Activated CD4-positive, alpha-beta memory T cell treated with anti-CD3 and anti-CD28 coated beads for 36 hours (primary cell): ENCODE measurements at regions of chr7 and their contacts with region 1.

Region 1: DNA sequence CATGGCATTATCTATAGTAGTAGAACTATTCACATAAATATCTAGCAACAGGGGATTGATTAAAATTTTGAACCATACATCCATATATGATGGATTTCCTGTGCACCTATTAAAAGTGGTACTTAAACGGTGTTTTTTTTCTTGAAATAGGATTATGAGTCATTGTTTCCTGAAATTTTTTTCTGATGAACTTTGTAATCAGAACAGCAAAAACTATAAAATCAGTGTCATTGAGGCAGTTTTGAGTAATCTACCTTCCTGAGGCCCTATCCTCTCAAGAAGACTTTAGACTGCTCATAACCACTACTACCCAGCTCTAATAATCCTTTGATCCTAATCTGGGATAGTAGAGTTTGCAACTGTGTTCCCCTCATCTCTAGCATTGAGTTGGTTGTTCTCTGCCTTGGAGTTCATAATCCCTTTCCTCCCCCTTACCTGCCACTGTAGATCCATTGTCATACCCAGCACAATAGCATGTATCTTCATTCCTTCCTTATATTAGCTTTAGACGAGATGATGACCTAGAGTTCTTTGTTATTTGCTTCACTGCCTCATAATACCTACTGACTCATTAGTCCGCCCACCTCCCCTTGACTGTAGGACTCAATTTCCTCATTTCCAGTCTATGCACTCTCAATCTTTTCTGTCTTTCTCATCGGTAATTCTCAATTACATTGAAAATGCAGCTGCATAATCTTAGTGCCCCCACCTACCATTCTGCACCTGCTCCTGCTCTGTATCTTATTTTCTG is 133.4 kb downstream of the LRRC4 start:
- DNase-seq: peak; percentile 55
- H3K4me3 Mint-ChIP-seq: no peak overlapping the region
- H3K27ac Mint-ChIP-seq: no peak overlapping the region
- H3K4me1 Mint-ChIP-seq: peaks cover 12% of the 10 kb centered on the region
- H3K27me3 Mint-ChIP-seq: no peaks in the 10 kb centered on the region

Region 2: DNA sequence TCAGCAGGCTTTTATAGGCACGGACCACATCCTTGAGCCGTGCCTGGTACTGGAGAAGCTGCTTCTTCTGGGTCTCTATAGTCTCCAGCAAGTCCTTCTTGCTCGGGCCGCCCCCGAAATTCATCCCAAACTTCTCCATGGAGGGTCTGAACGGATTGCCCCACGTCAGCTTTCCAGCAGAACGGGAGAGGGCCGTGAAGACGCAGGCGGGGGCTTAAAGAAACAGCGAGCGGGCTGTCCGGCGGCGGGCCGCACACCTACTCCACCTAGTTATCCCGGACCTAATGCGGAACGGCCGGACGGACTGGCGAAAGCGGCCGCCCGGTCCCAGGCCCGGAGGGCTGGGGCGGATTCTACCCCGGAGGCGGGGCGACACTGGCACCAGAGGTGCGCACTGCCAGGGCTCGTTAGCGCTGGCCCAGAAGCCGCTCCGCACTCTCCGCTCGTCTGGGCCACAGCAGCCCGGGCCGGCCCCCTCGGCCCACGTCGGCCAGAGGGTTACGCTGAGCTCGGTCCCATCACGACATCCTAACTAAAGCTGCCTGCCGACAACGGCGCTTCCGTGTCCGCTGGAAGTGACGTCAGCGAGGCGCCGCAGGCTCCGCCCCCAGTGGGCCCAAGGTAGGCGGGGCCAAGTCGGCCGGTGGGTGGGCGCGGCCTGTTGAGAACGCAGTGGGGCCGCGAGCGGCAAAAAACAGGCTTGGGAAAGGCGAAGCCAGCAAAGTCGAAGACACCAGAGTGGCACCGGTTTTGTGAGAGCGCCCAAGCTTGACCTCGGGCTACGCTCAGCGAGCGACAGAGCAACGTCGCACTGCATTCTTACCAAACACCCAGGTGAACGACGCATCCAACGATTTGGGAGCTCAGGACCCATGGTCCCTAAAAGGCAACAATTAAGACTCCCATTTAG is 312.6 kb before region 1 on chr7 and contains the start of gene GCC1:
- CTCF ChIA-PET with region 1: no interaction called
- POLR2A ChIA-PET with region 1: no interaction called
- intact Hi-C with region 1: loop called (anchors 1 kb)
- DNase-seq: peak; percentile 96
- H3K4me3 Mint-ChIP-seq: peak within 1 kb of the TSS; percentile 88
- H3K27ac Mint-ChIP-seq: peak within 1 kb of the TSS; percentile 64
- H3K4me1 Mint-ChIP-seq: peaks cover 69% of the 10 kb centered on the region
- H3K27me3 Mint-ChIP-seq: no peaks in the 10 kb centered on the region
- total RNA-seq, gene GCC1: 14.1 to 15.0 TPM

Region 3: GRCh38 chr7:127651556-127652332 is 246.1 kb before region 1 on chr7 and contains the start of gene SND1:
- CTCF ChIA-PET with region 1: no interaction called
- POLR2A ChIA-PET with region 1: no interaction called
- intact Hi-C with region 1: loop called (anchors 5 kb)
- DNase-seq: peak; percentile 100
- H3K4me3 Mint-ChIP-seq: peak within 1 kb of the TSS; percentile 98
- H3K27ac Mint-ChIP-seq: peak within 1 kb of the TSS; percentile 94
- H3K4me1 Mint-ChIP-seq: peaks cover 31% of the 10 kb centered on the region
- H3K27me3 Mint-ChIP-seq: no peaks in the 10 kb centered on the region
- total RNA-seq, gene SND1: 208 to 235 TPM

Region 4: GRCh38 chr7:127858091-127858914 is 39.6 kb before region 1 on chr7:
- CTCF ChIA-PET with region 1: interaction called, 6 read pairs
- POLR2A ChIA-PET with region 1: interaction called, 8 read pairs
- intact Hi-C with region 1: loop called (anchors 1 kb)
- DNase-seq: no peak
- H3K4me3 Mint-ChIP-seq: no peak overlapping the region
- H3K27ac Mint-ChIP-seq: peak overlapping the region; percentile 23
- H3K4me1 Mint-ChIP-seq: peaks cover 60% of the 10 kb centered on the region
- H3K27me3 Mint-ChIP-seq: no peaks in the 10 kb centered on the region

Region 5: GRCh38 chr7:127874951-127875608 is 22.8 kb before region 1 on chr7:
- CTCF ChIA-PET with region 1: no interaction called
- POLR2A ChIA-PET with region 1: interaction called, 3 read pairs
- intact Hi-C with region 1: loop called (anchors 1 kb)
- DNase-seq: no peak
- H3K4me3 Mint-ChIP-seq: no peak overlapping the region
- H3K27ac Mint-ChIP-seq: no peak overlapping the region
- H3K4me1 Mint-ChIP-seq: peaks cover 23% of the 10 kb centered on the region
- H3K27me3 Mint-ChIP-seq: no peaks in the 10 kb centered on the region

Region 6: DNA sequence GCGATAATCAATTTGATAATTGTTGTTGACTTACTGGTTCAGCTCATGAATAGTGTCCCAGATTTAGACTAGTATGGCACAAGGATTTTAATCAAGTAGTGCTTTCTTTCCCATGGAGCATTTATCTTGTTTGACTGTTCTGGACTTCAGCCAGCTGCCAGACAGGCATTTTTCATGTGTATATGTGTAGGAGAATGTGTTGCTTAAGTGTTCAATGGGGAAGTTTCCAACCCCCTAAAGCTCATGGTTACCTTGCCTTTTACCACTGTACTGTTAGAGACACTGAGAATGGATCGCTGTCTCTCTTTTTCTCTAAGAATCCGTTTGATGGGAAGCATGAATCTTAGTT is 29.4 kb after region 1 on chr7:
- CTCF ChIA-PET with region 1: no interaction called
- POLR2A ChIA-PET with region 1: no interaction called
- intact Hi-C with region 1: loop called (anchors 2 kb)
- DNase-seq: no peak
- H3K4me3 Mint-ChIP-seq: no peak overlapping the region
- H3K27ac Mint-ChIP-seq: no peak overlapping the region
- H3K4me1 Mint-ChIP-seq: peaks cover 14% of the 10 kb centered on the region
- H3K27me3 Mint-ChIP-seq: no peaks in the 10 kb centered on the region

Region 7: GRCh38 chr7:128031901-128032604 is 134.2 kb after region 1 on chr7:
- CTCF ChIA-PET with region 1: no interaction called
- POLR2A ChIA-PET with region 1: no interaction called
- intact Hi-C with region 1: loop called (anchors 5 kb)
- DNase-seq: peak; percentile 76
- H3K4me3 Mint-ChIP-seq: peak overlapping the region; percentile 72
- H3K27ac Mint-ChIP-seq: no peak overlapping the region
- H3K4me1 Mint-ChIP-seq: peaks cover 17% of the 10 kb centered on the region
- H3K27me3 Mint-ChIP-seq: no peaks in the 10 kb centered on the region